Endothelial cell of umbilical vein (primary cell): ENCODE measurements at regions of chr12 and their contacts with region 1.

Region 1: GRCh38 chr12:4579305-4580102 is 17.5 kb downstream of the DYRK4 start:
- DNase-seq: peak; percentile 26
- H3K4me3 ChIP-seq: no peak overlapping the region
- H3K27ac ChIP-seq: no peak overlapping the region
- H3K4me1 ChIP-seq: peaks cover 12% of the 10 kb centered on the region
- H3K27me3 ChIP-seq: peaks cover 4 to 7% of the 10 kb centered on the region in 2 experiments
- CTCF ChIP-seq: no peak
- POLR2A ChIP-seq: no peak

Region 2: GRCh38 chr12:4215229-4216186 is 364.0 kb before region 1 on chr12:
- CTCF ChIA-PET with region 1: no interaction called
- POLR2A ChIA-PET with region 1: no interaction called
- dilution Hi-C with region 1: no loop called
- intact Hi-C with region 1: no loop called
- DNase-seq: no peak
- H3K4me3 ChIP-seq: no peak overlapping the region
- H3K27ac ChIP-seq: no peak overlapping the region
- H3K4me1 ChIP-seq: no peaks in the 10 kb centered on the region
- H3K27me3 ChIP-seq: no peaks in the 10 kb centered on the region
- CTCF ChIP-seq: no peak
- POLR2A ChIP-seq: no peak

Region 3: GRCh38 chr12:4763549-4763948 is 184.0 kb after region 1 on chr12:
- CTCF ChIA-PET with region 1: interaction called, 10 read pairs
- POLR2A ChIA-PET with region 1: no interaction called
- dilution Hi-C with region 1: no loop called
- intact Hi-C with region 1: loop called (anchors 1 kb)
- DNase-seq: no peak
- H3K4me3 ChIP-seq: no peak overlapping the region
- H3K27ac ChIP-seq: no peak overlapping the region
- H3K4me1 ChIP-seq: no peaks in the 10 kb centered on the region
- H3K27me3 ChIP-seq: peaks cover 0 to 2% of the 10 kb centered on the region in 2 experiments
- CTCF ChIP-seq: no peak
- POLR2A ChIP-seq: no peak